CD4-positive, alpha-beta T cell (primary cell): ENCODE measurements at regions of chr3 and their contacts with region 1.

Region 1: DNA sequence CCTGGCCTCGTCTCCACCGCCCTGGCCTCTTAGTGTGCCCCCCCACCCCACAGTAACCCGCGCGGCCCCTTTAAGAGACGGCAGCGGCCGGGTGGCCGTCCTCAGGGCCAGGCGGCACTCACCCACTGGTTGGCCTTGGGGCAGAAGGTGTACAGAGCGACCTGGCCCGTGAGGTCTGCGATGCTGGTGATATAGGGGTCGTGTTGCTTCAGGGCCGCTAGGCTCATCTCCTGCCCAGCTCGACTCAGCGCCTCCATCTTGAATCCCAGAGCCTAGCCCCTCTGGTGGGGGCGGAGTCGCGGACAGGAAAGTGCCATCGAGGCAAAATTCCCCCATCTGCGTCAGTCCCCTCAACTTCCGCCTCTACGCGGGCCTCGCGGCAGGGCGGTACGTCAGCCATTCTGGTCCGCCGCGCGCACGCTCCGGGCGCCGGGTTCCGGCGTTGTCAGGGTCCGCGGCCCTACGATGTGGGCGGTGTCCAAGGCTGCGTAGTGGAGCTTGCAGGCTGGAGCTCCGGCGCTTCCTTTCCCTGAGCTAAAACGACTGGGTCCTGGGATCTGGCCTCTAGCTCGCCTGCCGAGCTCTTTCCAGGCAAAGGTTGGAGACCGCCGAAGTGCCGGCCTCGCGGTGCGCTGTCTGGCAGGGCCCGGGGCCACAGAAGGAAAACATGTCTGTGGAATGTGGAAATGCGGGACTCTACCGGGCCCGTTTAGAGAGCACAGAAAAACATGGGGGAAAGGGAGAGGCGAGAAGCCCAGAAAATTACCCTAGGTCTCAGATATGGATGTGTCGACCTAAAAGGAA is at the start of gene DCP1A:
- DNase-seq: peak; percentile 91 to 98 (median 94)
- ATAC-seq: peak; percentile 93
- H3K4me3 ChIP-seq: peak within 1 kb of the TSS; percentile 99
- H3K4me3 Mint-ChIP-seq: peak within 1 kb of the TSS; percentile 99
- H3K27ac ChIP-seq: peak within 1 kb of the TSS; percentile 80 to 92
- H3K27ac Mint-ChIP-seq: peak within 1 kb of the TSS; percentile 98
- H3K4me1 ChIP-seq: peaks cover 15% of the 10 kb centered on the region
- H3K4me1 Mint-ChIP-seq: peaks cover 51% of the 10 kb centered on the region
- H3K27me3 ChIP-seq: no peaks in the 10 kb centered on the region
- H3K27me3 Mint-ChIP-seq: no peaks in the 10 kb centered on the region
- CTCF ChIP-seq: no peak
- total RNA-seq, gene DCP1A: 58.9 to 60.1 TPM

Region 2: DNA sequence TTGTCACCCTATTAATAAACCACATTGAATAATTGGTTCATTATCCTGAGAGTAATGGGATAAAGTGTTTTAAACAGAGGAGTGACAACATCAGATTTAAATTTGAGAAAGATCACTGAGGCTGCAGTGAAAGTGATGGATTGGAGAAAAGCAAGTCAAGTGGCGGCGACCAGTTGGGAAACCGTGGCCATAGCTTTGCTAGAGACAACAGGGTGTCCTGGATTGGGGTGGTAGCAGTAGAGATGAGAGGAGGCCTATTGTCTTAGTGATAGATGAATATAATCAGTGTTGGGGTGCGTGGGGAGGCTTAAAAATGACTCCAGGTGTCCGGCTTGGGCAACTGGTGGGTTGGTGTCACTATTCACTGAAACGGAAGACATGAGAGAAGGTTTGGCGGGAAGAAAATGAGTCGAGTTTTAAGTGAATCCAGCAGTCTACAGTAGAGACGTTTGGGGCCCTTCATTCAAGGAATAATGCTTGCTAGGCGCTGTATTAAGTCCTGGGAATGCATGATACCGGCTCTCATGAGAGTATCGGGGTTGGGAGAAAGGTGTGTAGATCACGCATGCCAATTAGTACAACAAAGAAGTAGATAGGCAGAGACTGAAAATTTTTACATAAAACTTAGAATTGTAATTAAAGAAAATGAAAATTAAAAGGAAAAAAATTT is 577.5 kb before region 1 on chr3:
- CTCF ChIA-PET with region 1: no interaction called
- POLR2A ChIA-PET with region 1: no interaction called
- intact Hi-C with region 1: loop called in 1 of 2 experiments (anchors 10 kb)
- DNase-seq: no peak
- ATAC-seq: no peak
- H3K4me3 ChIP-seq: peak overlapping the region; percentile 83
- H3K4me3 Mint-ChIP-seq: peak overlapping the region; percentile 96
- H3K27ac ChIP-seq: peak overlapping the region in 1 of 2 donors; percentile 72
- H3K27ac Mint-ChIP-seq: peak overlapping the region; percentile 73
- H3K4me1 ChIP-seq: peaks cover 14% of the 10 kb centered on the region
- H3K4me1 Mint-ChIP-seq: peaks cover 17% of the 10 kb centered on the region
- H3K27me3 ChIP-seq: no peaks in the 10 kb centered on the region
- H3K27me3 Mint-ChIP-seq: no peaks in the 10 kb centered on the region
- CTCF ChIP-seq: no peak

Region 3: GRCh38 chr3:53160660-53161449 is 186.6 kb before region 1 on chr3 and contains the start of gene PRKCD:
- CTCF ChIA-PET with region 1: no interaction called
- POLR2A ChIA-PET with region 1: interaction called, 3 read pairs
- intact Hi-C with region 1: loop called in 1 of 2 experiments (anchors 10 kb)
- DNase-seq: peak; percentile 61 to 94 (median 78)
- ATAC-seq: peak; percentile 78
- H3K4me3 ChIP-seq: peak within 1 kb of the TSS; percentile 98
- H3K4me3 Mint-ChIP-seq: peak within 1 kb of the TSS; percentile 90
- H3K27ac ChIP-seq: peak within 1 kb of the TSS; percentile 47 to 58
- H3K27ac Mint-ChIP-seq: peak within 1 kb of the TSS; percentile 79
- H3K4me1 ChIP-seq: peaks cover 38% of the 10 kb centered on the region
- H3K4me1 Mint-ChIP-seq: peaks cover 22% of the 10 kb centered on the region
- H3K27me3 ChIP-seq: peaks cover 10 to 12% of the 10 kb centered on the region in 2 experiments
- H3K27me3 Mint-ChIP-seq: peaks cover 3% of the 10 kb centered on the region
- CTCF ChIP-seq: peak; percentile 41
- total RNA-seq, gene PRKCD: 18.1 to 20.1 TPM

Region 4: GRCh38 chr3:53274938-53275605 is 72.4 kb before region 1 on chr3:
- CTCF ChIA-PET with region 1: no interaction called
- POLR2A ChIA-PET with region 1: interaction called, 17 read pairs
- intact Hi-C with region 1: no loop called
- DNase-seq: peak in 7 of 14 experiments; percentile 10 to 33 (median 24)
- ATAC-seq: peak; percentile 95
- H3K4me3 ChIP-seq: no peak overlapping the region
- H3K4me3 Mint-ChIP-seq: peak overlapping the region; percentile 52
- H3K27ac ChIP-seq: no peak overlapping the region
- H3K27ac Mint-ChIP-seq: peak overlapping the region; percentile 82
- H3K4me1 ChIP-seq: no peaks in the 10 kb centered on the region
- H3K4me1 Mint-ChIP-seq: peaks cover 9% of the 10 kb centered on the region
- H3K27me3 ChIP-seq: no peaks in the 10 kb centered on the region
- H3K27me3 Mint-ChIP-seq: no peaks in the 10 kb centered on the region
- CTCF ChIP-seq: no peak

Region 5: GRCh38 chr3:53478166-53478830 is 130.8 kb after region 1 on chr3:
- CTCF ChIA-PET with region 1: no interaction called
- POLR2A ChIA-PET with region 1: no interaction called
- intact Hi-C with region 1: no loop called
- DNase-seq: no peak
- ATAC-seq: no peak
- H3K4me3 ChIP-seq: no peak overlapping the region
- H3K4me3 Mint-ChIP-seq: no peak overlapping the region
- H3K27ac ChIP-seq: no peak overlapping the region
- H3K27ac Mint-ChIP-seq: no peak overlapping the region
- H3K4me1 ChIP-seq: no peaks in the 10 kb centered on the region
- H3K4me1 Mint-ChIP-seq: no peaks in the 10 kb centered on the region
- H3K27me3 ChIP-seq: peaks cover 9 to 13% of the 10 kb centered on the region in 2 experiments
- H3K27me3 Mint-ChIP-seq: peaks cover 73% of the 10 kb centered on the region
- CTCF ChIP-seq: no peak

Region 6: DNA sequence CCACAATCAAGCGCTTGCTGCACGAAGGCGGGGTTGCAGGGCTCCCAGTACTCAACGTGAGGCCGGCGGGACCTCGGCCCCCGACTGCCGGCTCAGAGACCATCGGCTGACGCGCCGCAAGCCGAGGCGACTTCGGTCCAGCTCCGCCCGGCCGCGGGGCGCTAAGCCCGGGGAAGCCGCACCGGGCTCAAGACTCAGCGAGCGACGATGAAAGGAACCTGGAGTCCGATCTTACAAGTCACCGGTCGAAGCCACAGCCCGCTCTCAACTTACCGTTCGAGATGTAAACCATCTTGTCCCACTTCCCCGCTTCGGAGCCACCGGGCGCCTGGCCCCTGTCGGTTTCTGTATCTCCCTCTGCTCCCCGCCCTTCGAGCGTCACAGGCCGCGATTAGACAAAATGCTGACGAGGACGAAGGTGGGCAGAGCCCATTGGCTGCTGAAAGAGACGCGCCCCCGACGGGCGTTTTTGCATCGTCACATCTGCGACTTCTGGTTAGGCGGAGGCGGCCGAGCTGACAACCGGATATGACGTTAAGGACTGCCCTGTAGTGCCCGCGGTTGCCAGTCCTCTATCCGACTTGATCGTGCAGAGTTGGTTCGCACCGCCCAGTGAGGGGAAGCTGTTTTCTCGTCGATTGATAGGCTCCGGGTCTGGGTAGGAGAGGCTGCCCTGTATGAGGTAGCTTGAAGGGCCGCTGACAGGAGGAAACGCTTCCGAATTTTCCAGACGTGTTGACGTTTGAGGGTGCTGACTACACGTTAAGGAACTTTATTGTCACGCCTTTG is 544.2 kb after region 1 on chr3 and contains the start of gene SELENOK:
- CTCF ChIA-PET with region 1: no interaction called
- POLR2A ChIA-PET with region 1: interaction called, 24 read pairs
- intact Hi-C with region 1: loop called in 1 of 2 experiments (anchors 5 kb)
- DNase-seq: peak; percentile 91 to 99 (median 95)
- ATAC-seq: peak; percentile 89
- H3K4me3 ChIP-seq: peak within 1 kb of the TSS; percentile 88
- H3K4me3 Mint-ChIP-seq: peak within 1 kb of the TSS; percentile 98
- H3K27ac ChIP-seq: peak within 1 kb of the TSS; percentile 92 to 96
- H3K27ac Mint-ChIP-seq: peak within 1 kb of the TSS; percentile 100
- H3K4me1 ChIP-seq: peaks cover 21% of the 10 kb centered on the region
- H3K4me1 Mint-ChIP-seq: peaks cover 61% of the 10 kb centered on the region
- H3K27me3 ChIP-seq: peaks cover 0 to 5% of the 10 kb centered on the region in 2 experiments
- H3K27me3 Mint-ChIP-seq: peaks cover 6% of the 10 kb centered on the region
- CTCF ChIP-seq: no peak
- total RNA-seq, gene SELENOK: 153 to 159 TPM